T-cell (primary cell): ENCODE measurements at regions of chr5 and their contacts with region 1.

Region 1: DNA sequence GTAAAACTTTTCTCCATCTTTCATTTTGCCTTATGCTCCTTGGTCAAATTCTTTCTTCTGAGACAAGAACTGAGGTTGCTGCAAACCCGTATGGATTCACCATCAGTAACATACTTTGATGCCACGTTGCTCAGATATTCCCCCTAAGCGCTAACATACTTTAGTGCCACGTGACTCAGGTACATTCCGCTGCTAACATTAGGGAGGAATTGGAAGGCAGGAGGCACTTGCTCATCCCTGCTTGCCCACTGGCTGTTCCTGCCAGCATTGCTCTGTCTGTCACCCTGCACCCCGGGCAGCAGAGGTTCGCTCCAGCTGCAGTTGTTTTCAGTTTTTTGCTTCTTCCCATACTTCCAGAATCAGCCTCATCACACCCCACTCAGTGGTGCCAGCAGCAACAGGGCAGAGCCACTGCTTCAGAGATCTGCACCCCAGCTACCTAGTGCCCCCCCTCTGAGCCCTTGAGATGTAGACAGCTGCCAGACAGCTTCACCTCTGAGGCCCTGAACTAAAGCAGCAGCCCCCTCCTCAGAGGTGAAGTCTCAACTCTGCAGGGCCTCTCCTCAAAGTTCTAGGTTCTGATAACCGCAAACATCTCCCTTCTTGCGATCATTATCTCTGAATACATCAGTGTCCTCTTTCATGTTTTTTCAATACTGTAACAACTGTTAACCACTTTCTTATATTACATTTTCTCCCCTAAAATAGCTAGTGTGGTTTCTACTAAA is 228.0 kb upstream of the KIF2A start:
- DNase-seq: no peak
- ATAC-seq: no peak
- H3K4me3 ChIP-seq: no peak overlapping the region
- H3K4me3 Mint-ChIP-seq: no peak overlapping the region
- H3K27ac ChIP-seq: no peak overlapping the region
- H3K27ac Mint-ChIP-seq: no peak overlapping the region
- H3K4me1 ChIP-seq: peaks cover 0 to 4% of the 10 kb centered on the region in 2 experiments
- H3K4me1 Mint-ChIP-seq: peaks cover 0 to 9% (median 7%) of the 10 kb centered on the region in 3 donors
- H3K27me3 ChIP-seq: no peaks in the 10 kb centered on the region
- H3K27me3 Mint-ChIP-seq: peaks cover 0 to 6% of the 10 kb centered on the region in 2 donors

Region 2: GRCh38 chr5:62093411-62093810 is 15.4 kb after region 1 on chr5:
- CTCF ChIA-PET with region 1: no interaction called
- POLR2A ChIA-PET with region 1: no interaction called
- DNase-seq: no peak
- ATAC-seq: no peak
- H3K4me3 ChIP-seq: no peak overlapping the region
- H3K4me3 Mint-ChIP-seq: peak overlapping the region in 2 of 3 donors; percentile 35 to 60
- H3K27ac ChIP-seq: no peak overlapping the region
- H3K27ac Mint-ChIP-seq: no peak overlapping the region
- H3K4me1 ChIP-seq: no peaks in the 10 kb centered on the region
- H3K4me1 Mint-ChIP-seq: peaks cover 11 to 15% (median 15%) of the 10 kb centered on the region in 3 donors
- H3K27me3 ChIP-seq: peaks cover 0 to 4% of the 10 kb centered on the region in 2 experiments
- H3K27me3 Mint-ChIP-seq: peaks cover 1 to 12% of the 10 kb centered on the region in 2 donors

Region 3: DNA sequence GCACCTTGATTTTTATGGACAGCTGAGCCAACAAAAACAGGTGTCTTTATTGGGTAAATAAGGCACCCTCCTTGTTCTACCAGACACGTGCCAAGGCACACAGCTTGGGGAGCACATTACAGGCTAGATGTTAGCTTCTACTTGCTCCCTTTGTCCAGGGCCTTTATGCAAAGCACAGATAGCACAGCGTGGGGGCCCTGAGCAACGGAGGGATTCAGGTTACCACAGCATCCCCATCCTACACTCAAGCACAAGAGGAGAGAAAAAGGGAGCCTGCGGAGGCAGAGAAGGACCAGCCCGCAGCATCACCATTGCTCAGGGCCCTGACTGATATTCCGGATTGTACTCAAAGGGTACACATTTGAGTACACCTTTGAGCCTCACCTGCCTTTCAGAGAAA is 46.3 kb after region 1 on chr5:
- CTCF ChIA-PET with region 1: no interaction called
- POLR2A ChIA-PET with region 1: interaction called in 1 of 2 experiments, 12 read pairs
- DNase-seq: no peak
- ATAC-seq: no peak
- H3K4me3 ChIP-seq: no peak overlapping the region
- H3K4me3 Mint-ChIP-seq: no peak overlapping the region
- H3K27ac ChIP-seq: no peak overlapping the region
- H3K27ac Mint-ChIP-seq: no peak overlapping the region
- H3K4me1 ChIP-seq: no peaks in the 10 kb centered on the region
- H3K4me1 Mint-ChIP-seq: no peaks in the 10 kb centered on the region
- H3K27me3 ChIP-seq: peaks cover 0 to 5% of the 10 kb centered on the region in 2 experiments
- H3K27me3 Mint-ChIP-seq: peaks cover 4 to 6% of the 10 kb centered on the region in 2 donors

Region 4: DNA sequence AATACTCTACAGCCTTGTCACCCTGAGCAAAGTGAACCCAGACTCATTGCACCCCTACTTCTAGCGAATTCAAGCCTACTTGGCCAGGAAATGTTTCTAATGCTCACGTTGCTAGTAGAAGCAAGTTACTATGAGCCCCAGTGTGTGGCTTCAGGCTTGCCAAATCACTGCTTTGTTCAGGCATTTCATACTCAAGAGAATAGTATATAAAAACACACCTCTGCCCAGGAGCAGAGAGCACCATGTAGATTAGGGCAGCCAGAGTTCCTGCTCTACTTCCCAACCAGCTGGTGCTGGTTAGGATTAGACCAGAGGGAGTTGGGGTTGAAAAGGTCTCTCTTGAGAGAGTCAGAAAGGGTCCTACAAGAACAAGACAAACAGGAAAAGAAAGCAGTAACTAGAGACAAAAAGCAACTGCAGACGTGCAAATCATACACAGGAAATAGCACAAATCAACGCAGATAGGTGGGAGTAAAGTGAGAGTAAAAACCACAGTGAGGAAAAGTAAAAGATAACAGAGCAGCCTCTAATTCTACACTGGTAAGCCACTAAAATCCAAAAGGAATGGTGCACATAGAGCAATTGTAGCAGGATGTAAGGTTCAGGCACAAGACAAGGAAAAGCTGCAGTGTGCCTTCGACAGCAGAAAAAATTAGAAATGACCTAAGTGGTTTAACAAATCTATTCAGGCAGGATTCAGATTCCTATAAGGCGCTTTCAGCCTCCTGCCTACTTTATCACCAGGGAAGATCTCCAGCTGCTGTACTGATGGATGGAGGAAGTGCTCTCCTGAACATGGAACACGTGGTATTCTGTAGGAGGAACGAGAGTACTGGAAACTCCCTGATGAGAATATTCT is 178.4 kb after region 1 on chr5:
- CTCF ChIA-PET with region 1: no interaction called
- POLR2A ChIA-PET with region 1: no interaction called
- DNase-seq: peak in 28 of 35 experiments; percentile 1 to 62 (median 12)
- ATAC-seq: peak; percentile 87 to 90 (median 89)
- H3K4me3 ChIP-seq: peak overlapping the region; percentile 30 to 51
- H3K4me3 Mint-ChIP-seq: peak overlapping the region; percentile 56 to 79 (median 73)
- H3K27ac ChIP-seq: peak overlapping the region; percentile 91
- H3K27ac Mint-ChIP-seq: peak overlapping the region; percentile 99 to 100
- H3K4me1 ChIP-seq: peaks cover 31 to 54% of the 10 kb centered on the region in 2 experiments
- H3K4me1 Mint-ChIP-seq: peaks cover 65 to 74% (median 72%) of the 10 kb centered on the region in 3 donors
- H3K27me3 ChIP-seq: no peaks in the 10 kb centered on the region
- H3K27me3 Mint-ChIP-seq: no peaks in the 10 kb centered on the region

Region 5: DNA sequence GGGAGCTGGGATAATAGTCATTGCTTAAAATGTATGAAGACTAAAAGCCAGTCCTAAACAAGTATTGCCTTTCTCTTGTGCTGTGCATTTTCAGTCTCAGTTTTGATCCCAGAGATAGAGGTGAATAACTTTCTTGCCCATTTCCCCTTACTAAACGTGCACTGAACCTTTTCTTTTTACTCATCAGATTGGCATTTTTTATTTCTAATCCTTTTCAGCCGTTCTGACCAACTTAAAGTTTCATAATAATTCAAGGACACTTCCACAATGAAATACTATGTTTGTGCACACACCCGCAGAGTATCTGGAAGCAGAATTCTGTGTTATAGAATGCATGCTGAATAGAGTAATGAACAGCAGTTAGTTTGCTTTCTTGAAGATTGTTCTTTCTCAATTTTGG is 844.2 kb after region 1 on chr5:
- CTCF ChIA-PET with region 1: no interaction called
- POLR2A ChIA-PET with region 1: no interaction called
- DNase-seq: no peak
- ATAC-seq: no peak
- H3K4me3 ChIP-seq: no peak overlapping the region
- H3K4me3 Mint-ChIP-seq: no peak overlapping the region
- H3K27ac ChIP-seq: no peak overlapping the region
- H3K27ac Mint-ChIP-seq: no peak overlapping the region
- H3K4me1 ChIP-seq: no peaks in the 10 kb centered on the region
- H3K4me1 Mint-ChIP-seq: no peaks in the 10 kb centered on the region
- H3K27me3 ChIP-seq: no peaks in the 10 kb centered on the region
- H3K27me3 Mint-ChIP-seq: no peaks in the 10 kb centered on the region